ENCODE measurements at regions of chr12 and their contacts with region 1.

Region 1: DNA sequence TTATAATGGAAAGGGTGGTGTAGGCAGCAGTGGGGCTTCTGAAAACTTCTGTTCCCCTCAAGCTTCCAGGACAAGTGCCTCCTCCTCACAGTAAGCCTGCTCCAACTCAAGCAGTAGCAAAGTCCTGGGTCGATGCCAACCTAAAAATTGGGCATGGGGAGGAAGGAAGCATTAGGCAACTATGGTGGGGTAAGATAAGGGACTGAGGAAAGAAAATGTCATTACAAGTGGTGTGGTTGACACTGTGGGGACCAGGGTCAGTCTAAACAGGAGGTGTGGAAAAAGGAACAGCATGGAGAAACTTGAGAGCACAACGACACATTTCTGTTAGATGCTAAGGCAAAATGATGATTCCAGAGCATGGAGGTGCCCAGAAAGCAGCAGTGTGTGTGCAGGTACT is 34.9 kb downstream of the WIF1 start:
- DNase-seq: no peak
- H3K4me3 ChIP-seq: no peak overlapping the region
- H3K27ac ChIP-seq: no peak overlapping the region
- H3K4me1 ChIP-seq: no peaks in the 10 kb centered on the region
- H3K27me3 ChIP-seq: peaks cover 74% of the 10 kb centered on the region
- CTCF ChIP-seq: no peak

Region 2: GRCh38 chr12:64883596-64884542 is 202.4 kb before region 1 on chr12:
- CTCF ChIA-PET with region 1: no interaction called
- POLR2A ChIA-PET with region 1: interaction called, 13 read pairs
- intact Hi-C with region 1: no loop called
- DNase-seq: peak; percentile 18
- H3K4me3 ChIP-seq: no peak overlapping the region
- H3K27ac ChIP-seq: no peak overlapping the region
- H3K4me1 ChIP-seq: no peaks in the 10 kb centered on the region
- H3K27me3 ChIP-seq: no peaks in the 10 kb centered on the region
- CTCF ChIP-seq: peak; percentile 36; the same call in 1 of the 2 replicates

Region 3: GRCh38 chr12:65232476-65233077 is 146.3 kb after region 1 on chr12:
- CTCF ChIA-PET with region 1: no interaction called
- POLR2A ChIA-PET with region 1: no interaction called
- intact Hi-C with region 1: no loop called
- DNase-seq: peak; percentile 52
- H3K4me3 ChIP-seq: no peak overlapping the region
- H3K27ac ChIP-seq: no peak overlapping the region
- H3K4me1 ChIP-seq: no peaks in the 10 kb centered on the region
- H3K27me3 ChIP-seq: no peaks in the 10 kb centered on the region
- CTCF ChIP-seq: peak; percentile 65; the same call in 1 of the 2 replicates

Region 4: DNA sequence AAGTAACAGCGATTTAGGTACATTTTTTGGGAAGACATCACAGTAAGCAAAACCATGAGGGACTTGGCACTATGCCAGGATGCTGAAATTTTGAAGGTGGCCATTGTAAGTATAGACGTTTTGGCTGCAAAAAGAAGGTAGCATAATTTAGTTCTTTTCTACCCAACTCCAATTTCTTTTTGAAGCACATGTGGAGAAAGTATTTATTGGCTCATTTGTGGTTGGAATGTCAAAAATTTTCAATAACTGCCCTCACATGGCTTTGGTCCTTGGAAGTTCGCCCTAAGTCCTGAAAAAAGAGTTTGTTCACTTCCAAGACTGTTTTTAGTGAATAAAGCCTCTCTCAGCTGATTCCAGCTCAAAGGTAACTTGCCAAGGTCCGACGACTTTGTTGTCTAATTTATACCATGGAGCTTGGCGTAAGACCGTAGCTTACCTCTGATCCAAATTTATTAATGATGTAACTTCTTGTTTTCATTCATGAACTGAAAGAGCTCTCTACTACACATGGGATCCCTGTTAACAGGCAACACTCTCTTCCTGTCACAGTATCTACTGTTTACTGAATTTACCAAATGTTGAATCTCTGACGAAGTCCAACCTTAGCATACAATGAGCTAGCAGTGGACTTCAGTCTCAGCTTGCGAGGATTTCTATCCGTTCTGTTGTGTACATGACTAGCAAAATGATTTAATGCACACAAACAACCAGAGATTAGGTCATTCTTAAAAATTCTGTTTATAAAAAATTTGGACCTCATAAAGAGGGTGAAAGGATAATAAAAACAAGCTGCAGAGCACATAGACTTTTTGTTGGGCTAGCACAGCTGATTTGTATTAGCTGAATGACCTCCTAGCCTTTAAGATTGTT is 241.2 kb after region 1 on chr12:
- CTCF ChIA-PET with region 1: no interaction called
- POLR2A ChIA-PET with region 1: no interaction called
- intact Hi-C with region 1: no loop called
- DNase-seq: no peak
- H3K4me3 ChIP-seq: no peak overlapping the region
- H3K27ac ChIP-seq: no peak overlapping the region
- H3K4me1 ChIP-seq: peaks cover 17% of the 10 kb centered on the region
- H3K27me3 ChIP-seq: no peaks in the 10 kb centered on the region
- CTCF ChIP-seq: no peak